ENCODE measurements at regions of chr9 and their contacts with region 1.

Region 1: DNA sequence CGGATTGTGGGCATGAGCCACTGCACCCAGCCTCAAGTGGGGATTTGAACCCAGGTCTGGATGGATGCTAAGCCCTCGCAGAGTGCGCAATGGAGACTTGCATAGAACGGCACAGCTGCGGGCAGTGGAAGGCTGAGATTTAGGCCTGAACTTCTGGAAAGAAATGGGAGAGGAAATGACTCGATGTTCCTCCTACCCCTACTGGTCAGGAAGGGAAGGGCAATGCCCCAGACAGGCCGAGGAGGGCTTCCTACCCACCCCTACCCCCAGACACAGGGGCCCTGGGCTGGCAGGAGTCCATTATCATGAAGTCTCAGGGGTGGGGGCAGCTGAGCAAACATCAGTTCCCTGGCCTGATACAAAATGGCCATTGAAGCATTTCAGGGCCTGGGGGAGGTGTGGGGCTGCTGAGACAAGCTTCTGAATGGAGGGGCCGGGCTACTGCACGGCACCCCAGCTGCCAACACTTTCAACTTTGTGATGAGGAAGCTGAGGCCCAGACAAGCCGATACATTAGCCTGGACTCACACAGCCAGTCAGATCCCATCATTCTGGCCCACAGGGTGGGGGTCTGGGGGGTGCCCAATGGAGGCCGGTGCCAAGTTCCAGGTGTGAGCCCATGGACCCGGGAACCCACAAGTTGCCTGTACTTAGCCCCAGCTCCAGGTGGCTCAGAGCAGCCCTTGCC is 13.5 kb upstream of the WDR38 start:
- DNase-seq: no peak
- ATAC-seq: no peak
- H3K4me3 ChIP-seq: no peak overlapping the region
- H3K4me3 Mint-ChIP-seq: no peak overlapping the region
- H3K27ac ChIP-seq: no peak overlapping the region
- H3K27ac Mint-ChIP-seq: no peak overlapping the region
- H3K4me1 ChIP-seq: no peaks in the 10 kb centered on the region
- H3K4me1 Mint-ChIP-seq: no peaks in the 10 kb centered on the region
- H3K27me3 ChIP-seq: peaks cover 0 to 3% of the 10 kb centered on the region in 2 experiments
- H3K27me3 Mint-ChIP-seq: peaks cover 21% of the 10 kb centered on the region
- CTCF ChIP-seq: peak; percentile 28

Region 2: DNA sequence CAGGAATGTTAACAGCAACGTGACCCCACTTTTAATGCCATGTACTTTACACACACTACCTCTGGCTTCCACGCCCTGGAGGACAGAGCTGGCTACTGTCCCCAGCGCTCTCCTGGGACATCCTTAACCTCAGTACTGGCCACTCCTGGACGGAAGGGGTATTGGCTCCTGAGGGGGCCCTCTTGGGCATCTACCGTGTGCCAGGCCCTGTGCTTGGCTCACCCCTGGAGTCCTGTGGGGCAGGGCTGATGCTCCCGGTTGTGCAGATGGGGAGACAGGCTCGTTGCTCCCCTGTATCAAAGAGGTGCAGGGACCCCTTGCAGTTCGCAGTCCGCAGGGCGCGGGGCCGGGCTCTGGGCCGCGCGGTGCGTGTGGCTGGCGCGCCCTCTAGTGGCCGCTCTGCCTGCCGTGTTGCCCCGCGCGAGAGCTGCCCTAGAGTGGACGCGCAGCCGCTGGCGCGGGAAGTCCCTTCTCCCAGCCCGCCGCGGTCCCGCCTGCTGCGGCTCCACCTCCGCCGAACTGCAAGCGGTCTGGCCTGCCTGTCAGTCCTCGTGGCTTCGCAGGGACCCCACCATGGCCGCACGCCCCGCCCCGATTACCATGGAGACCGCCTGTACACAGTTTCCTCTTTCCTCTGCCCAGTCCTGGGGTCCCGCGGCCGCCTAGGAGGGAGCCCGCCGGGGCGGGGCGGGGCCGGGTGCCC is 13.2 kb after region 1 on chr9 and contains the start of gene WDR38:
- CTCF ChIA-PET with region 1: interaction called, 21 read pairs
- POLR2A ChIA-PET with region 1: no interaction called
- intact Hi-C with region 1: no loop called
- DNase-seq: peak; percentile 64 to 95 (median 80)
- ATAC-seq: peak; percentile 83
- H3K4me3 ChIP-seq: peak within 1 kb of the TSS; percentile 37 to 44
- H3K4me3 Mint-ChIP-seq: peak within 1 kb of the TSS; percentile 65
- H3K27ac ChIP-seq: peak within 1 kb of the TSS in 1 of 2 experiments; percentile 73
- H3K27ac Mint-ChIP-seq: peak within 1 kb of the TSS; percentile 64
- H3K4me1 ChIP-seq: peaks cover 12% of the 10 kb centered on the region
- H3K4me1 Mint-ChIP-seq: peaks cover 9% of the 10 kb centered on the region
- H3K27me3 ChIP-seq: no peaks in the 10 kb centered on the region
- H3K27me3 Mint-ChIP-seq: peaks cover 9% of the 10 kb centered on the region
- CTCF ChIP-seq: peak; percentile 98
- total RNA-seq, gene WDR38: not detected